Heart left ventricle (tissue), 16 donors: ENCODE measurements at regions of chr10 and their contacts with region 1.

Region 1: GRCh38 chr10:59625721-59626522 is 83.7 kb downstream of the SLC16A9 start:
- DNase-seq: peak in 3 of 5 donors; percentile 29 to 34 (median 31)
- ATAC-seq: peak; percentile 40 to 89 (median 82)
- H3K4me3 ChIP-seq: no peak overlapping the region
- H3K27ac ChIP-seq: peak overlapping the region in 2 of 12 donors; percentile 4 to 13
- H3K4me1 ChIP-seq: peaks cover 0 to 11% (median 0%) of the 10 kb centered on the region in 12 donors
- H3K27me3 ChIP-seq: peaks cover 0 to under 1% (median 0%) of the 10 kb centered on the region in 9 donors
- CTCF ChIP-seq: peak; percentile 67 to 90 (median 80)
- POLR2A ChIP-seq: no peak

Region 2: GRCh38 chr10:58952747-58953466 is 673.0 kb before region 1 on chr10:
- intact Hi-C with region 1: loop called in 4 of 10 experiments (anchors 10 kb)
- DNase-seq: peak in 2 of 5 donors; percentile 23 to 36
- ATAC-seq: peak; percentile 38 to 76 (median 70)
- H3K4me3 ChIP-seq: peak overlapping the region in 1 of 12 donors; percentile 11
- H3K27ac ChIP-seq: peak overlapping the region in 7 of 12 donors; percentile 32 to 88 (median 71)
- H3K4me1 ChIP-seq: peaks cover 0 to 13% (median 0%) of the 10 kb centered on the region in 12 donors
- H3K27me3 ChIP-seq: no peaks in the 10 kb centered on the region
- CTCF ChIP-seq: peak; percentile 61 to 86 (median 78)
- POLR2A ChIP-seq: no peak

Region 3: GRCh38 chr10:59240582-59241183 is 385.2 kb before region 1 on chr10:
- intact Hi-C with region 1: loop called (anchors 2 to 5 kb)
- DNase-seq: peak in 1 of 5 donors; percentile 9
- ATAC-seq: no peak
- H3K4me3 ChIP-seq: no peak overlapping the region
- H3K27ac ChIP-seq: no peak overlapping the region
- H3K4me1 ChIP-seq: peaks cover 0 to 4% (median 0%) of the 10 kb centered on the region in 12 donors
- H3K27me3 ChIP-seq: no peaks in the 10 kb centered on the region
- CTCF ChIP-seq: peak; percentile 45 to 85 (median 66)
- POLR2A ChIP-seq: no peak

Region 4: GRCh38 chr10:59580026-59580863 is 45.7 kb before region 1 on chr10:
- intact Hi-C with region 1: no loop called
- DNase-seq: no peak
- ATAC-seq: peak in 2 of 4 donors; percentile 54 to 57
- H3K4me3 ChIP-seq: no peak overlapping the region
- H3K27ac ChIP-seq: peak overlapping the region in 4 of 12 donors; percentile 21 to 51 (median 36)
- H3K4me1 ChIP-seq: peaks cover 0 to 21% (median 0%) of the 10 kb centered on the region in 12 donors
- H3K27me3 ChIP-seq: no peaks in the 10 kb centered on the region
- CTCF ChIP-seq: peak; percentile 31 to 71 (median 46)
- POLR2A ChIP-seq: no peak

Region 5: GRCh38 chr10:59830601-59831259 is 204.8 kb after region 1 on chr10:
- intact Hi-C with region 1: loop called in 8 of 10 experiments (anchors 1 to 5 kb)
- DNase-seq: peak in 4 of 5 donors; percentile 26 to 40 (median 34)
- ATAC-seq: peak in 3 of 4 donors; percentile 56 to 73 (median 57)
- H3K4me3 ChIP-seq: no peak overlapping the region
- H3K27ac ChIP-seq: no peak overlapping the region
- H3K4me1 ChIP-seq: peaks cover 0 to 41% (median 9%) of the 10 kb centered on the region in 12 donors
- H3K27me3 ChIP-seq: no peaks in the 10 kb centered on the region
- CTCF ChIP-seq: peak; percentile 64 to 87 (median 78)
- POLR2A ChIP-seq: no peak

Region 6: GRCh38 chr10:60032723-60033122 is 406.8 kb after region 1 on chr10:
- intact Hi-C with region 1: loop called (anchors 2 to 5 kb)
- DNase-seq: peak in 3 of 5 donors; percentile 19 to 32 (median 23)
- ATAC-seq: peak; percentile 65 to 93 (median 86)
- H3K4me3 ChIP-seq: no peak overlapping the region
- H3K27ac ChIP-seq: peak overlapping the region in 2 of 12 donors; percentile 12 to 24
- H3K4me1 ChIP-seq: peaks cover 0 to 18% (median 1%) of the 10 kb centered on the region in 12 donors
- H3K27me3 ChIP-seq: no peaks in the 10 kb centered on the region
- CTCF ChIP-seq: peak in 11 of 12 donors; percentile 8 to 67 (median 42)
- POLR2A ChIP-seq: no peak

Region 7: GRCh38 chr10:60434418-60435046 is 808.6 kb after region 1 on chr10:
- intact Hi-C with region 1: loop called in 4 of 10 experiments (anchors 10 kb)
- DNase-seq: peak in 3 of 5 donors; percentile 21 to 32 (median 28)
- ATAC-seq: peak in 3 of 4 donors; percentile 63 to 81 (median 72)
- H3K4me3 ChIP-seq: no peak overlapping the region
- H3K27ac ChIP-seq: no peak overlapping the region
- H3K4me1 ChIP-seq: peaks cover 0 to 28% (median 6%) of the 10 kb centered on the region in 12 donors
- H3K27me3 ChIP-seq: no peaks in the 10 kb centered on the region
- CTCF ChIP-seq: peak; percentile 36 to 78 (median 67)
- POLR2A ChIP-seq: no peak